PC-3 (cell line): ENCODE measurements at regions of chr10 and their contacts with region 1.

Region 1: GRCh38 chr10:123380497-123381085 is 226.4 kb downstream of the BUB3 start:
- DNase-seq: peak; percentile 69
- ATAC-seq: peak; percentile 39
- H3K4me3 ChIP-seq: 0 out of 2 replicates have a peak overlapping the region, but pooled peaks have one; percentile 14
- H3K27ac ChIP-seq: peak overlapping the region; percentile 65
- H3K4me1 ChIP-seq: peaks cover 39% of the 10 kb centered on the region
- H3K27me3 ChIP-seq: no peaks in the 10 kb centered on the region
- CTCF ChIP-seq: peak; percentile 66

Region 2: DNA sequence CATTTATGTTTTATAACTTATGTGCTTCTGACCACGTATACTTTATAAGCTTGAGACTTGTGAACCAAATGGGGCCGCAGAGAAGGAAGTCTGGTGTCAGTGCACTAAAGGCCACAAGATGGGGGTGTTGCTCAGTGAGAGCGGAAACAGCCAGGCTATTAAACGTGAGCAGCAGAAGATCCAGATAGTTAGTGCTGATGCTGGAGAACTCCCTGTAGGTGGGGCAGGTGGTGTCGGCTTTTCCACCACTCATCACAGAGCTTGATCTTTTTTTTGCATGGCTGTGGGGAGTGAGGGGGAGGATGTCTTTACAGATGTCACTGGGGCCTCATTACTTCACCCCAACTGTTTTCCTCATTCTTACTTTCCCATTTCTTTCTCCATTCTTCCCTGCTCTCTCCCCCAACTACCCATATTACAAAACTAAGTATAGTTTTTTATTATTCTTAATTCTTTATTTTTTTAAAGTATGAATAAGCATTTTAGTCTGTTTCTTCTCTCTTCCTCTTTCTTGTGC is 337.1 kb before region 1 on chr10:
- CTCF ChIA-PET with region 1: interaction called, 3 read pairs
- POLR2A ChIA-PET with region 1: no interaction called
- intact Hi-C with region 1: loop called (anchors 1 kb)
- DNase-seq: peak; percentile 76
- ATAC-seq: peak; percentile 96
- H3K4me3 ChIP-seq: no peak overlapping the region
- H3K27ac ChIP-seq: no peak overlapping the region
- H3K4me1 ChIP-seq: no peaks in the 10 kb centered on the region
- H3K27me3 ChIP-seq: no peaks in the 10 kb centered on the region
- CTCF ChIP-seq: peak; percentile 83

Region 3: DNA sequence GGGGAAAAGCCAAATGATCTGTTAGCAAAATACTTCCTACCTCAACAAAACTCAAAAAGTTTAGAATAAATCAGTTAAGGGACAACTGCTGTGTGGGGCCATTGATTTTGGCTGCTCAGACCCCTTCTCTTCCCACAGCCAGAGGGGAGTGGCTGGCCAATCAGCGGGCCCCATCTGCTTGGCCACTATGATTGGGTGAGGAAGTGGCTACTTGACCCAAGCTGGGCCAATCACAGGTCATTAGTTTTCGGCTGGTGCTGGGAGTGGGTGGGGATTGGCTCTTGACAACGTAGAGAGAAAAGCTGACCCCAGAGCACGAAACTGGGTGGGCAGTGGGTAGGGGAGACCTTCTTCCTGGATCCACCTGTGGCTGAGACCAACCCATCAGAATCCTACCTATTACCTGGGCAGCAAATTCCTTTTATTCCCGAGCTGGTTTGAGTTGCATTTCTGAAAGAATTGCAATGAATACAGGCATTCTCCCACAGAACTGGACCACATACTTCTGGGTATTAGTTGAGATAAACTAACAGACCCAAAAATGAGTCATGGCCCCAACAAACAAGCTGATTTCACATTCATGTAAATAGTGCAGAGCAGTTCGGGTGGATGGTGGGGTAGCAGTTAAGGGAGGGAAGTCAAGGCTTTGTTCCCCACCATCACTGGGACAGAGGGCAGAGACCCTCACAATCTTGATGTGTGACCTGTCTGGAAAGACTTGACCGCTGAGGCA is 280.4 kb before region 1 on chr10:
- CTCF ChIA-PET with region 1: no interaction called
- POLR2A ChIA-PET with region 1: no interaction called
- intact Hi-C with region 1: no loop called
- DNase-seq: peak; percentile 54
- ATAC-seq: peak; percentile 20; the same call in 1 of the 2 replicates
- H3K4me3 ChIP-seq: no peak overlapping the region
- H3K27ac ChIP-seq: no peak overlapping the region
- H3K4me1 ChIP-seq: peaks cover 11% of the 10 kb centered on the region
- H3K27me3 ChIP-seq: no peaks in the 10 kb centered on the region; the same call in 1 of the 2 replicates
- CTCF ChIP-seq: no peak

Region 4: GRCh38 chr10:123144697-123145541 is 235.7 kb before region 1 on chr10:
- CTCF ChIA-PET with region 1: interaction called, 5 read pairs
- POLR2A ChIA-PET with region 1: no interaction called
- intact Hi-C with region 1: loop called (anchors 1 kb)
- DNase-seq: peak; percentile 53
- ATAC-seq: peak; percentile 82
- H3K4me3 ChIP-seq: peak overlapping the region; percentile 52
- H3K27ac ChIP-seq: no peak overlapping the region
- H3K4me1 ChIP-seq: 0 out of 2 replicates have a peak, but pooled peaks cover 6% of the 10 kb centered on the region
- H3K27me3 ChIP-seq: peaks cover 24% of the 10 kb centered on the region
- CTCF ChIP-seq: peak; percentile 39; the same call in 1 of the 2 replicates

Region 5: DNA sequence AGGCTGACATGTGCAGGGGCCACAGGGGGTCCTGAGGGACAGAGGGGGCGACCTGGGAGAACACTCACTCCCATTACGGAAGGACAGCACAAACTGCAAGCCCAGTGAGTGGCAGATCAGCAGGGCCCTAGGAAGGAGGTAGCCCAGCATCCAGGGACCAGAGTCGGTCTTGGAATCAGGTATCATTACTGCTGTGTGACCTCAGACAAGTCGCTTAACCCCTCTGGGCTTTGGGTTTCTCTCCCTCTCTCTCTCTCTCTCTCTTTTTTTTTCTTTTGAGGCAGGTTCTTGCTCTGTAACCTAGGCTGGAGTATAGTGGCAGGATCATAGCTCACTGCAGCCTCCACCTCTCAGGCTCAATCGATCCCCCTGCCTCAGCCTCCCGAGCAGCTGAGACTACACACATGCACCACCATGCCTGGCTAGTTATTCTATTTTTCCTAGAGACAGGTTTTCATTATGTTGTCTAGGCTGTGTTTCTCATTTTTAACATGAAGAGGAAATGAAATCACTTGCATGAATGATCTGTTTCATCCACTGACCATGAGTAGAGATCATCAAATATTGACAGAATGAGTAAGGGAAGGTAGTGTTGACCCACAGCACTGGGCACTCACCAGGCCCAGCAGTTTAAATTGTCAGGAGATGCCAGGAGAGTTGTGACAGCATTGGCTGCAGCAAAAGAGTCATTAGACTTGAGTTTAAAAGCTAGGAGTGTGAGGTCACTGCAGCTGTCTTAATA is 177.0 kb before region 1 on chr10:
- CTCF ChIA-PET with region 1: no interaction called
- POLR2A ChIA-PET with region 1: no interaction called
- intact Hi-C with region 1: loop called (anchors 5 kb)
- DNase-seq: peak; percentile 90
- ATAC-seq: peak; percentile 97
- H3K4me3 ChIP-seq: no peak overlapping the region
- H3K27ac ChIP-seq: peak overlapping the region; percentile 97
- H3K4me1 ChIP-seq: peaks cover 34% of the 10 kb centered on the region
- H3K27me3 ChIP-seq: no peaks in the 10 kb centered on the region
- CTCF ChIP-seq: no peak

Region 6: DNA sequence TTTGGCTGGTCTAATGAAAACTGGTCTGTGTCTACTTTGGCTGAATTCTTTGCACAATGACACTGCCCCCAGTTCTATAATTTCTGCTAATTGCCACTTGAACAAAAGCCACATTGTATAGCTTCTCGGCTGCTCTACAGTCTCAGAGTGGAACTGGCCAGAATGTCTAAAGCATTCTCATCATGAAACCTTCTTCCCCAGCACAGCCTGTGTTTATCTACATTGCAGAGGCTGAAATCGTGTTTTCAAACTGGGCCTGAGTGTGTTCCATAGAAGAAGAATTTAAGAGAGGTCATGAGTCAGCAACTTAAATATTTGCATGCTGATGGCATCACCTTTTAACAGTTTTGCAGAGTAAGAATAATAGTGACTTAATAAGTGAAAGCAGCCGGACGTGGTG is 49.2 kb before region 1 on chr10:
- CTCF ChIA-PET with region 1: no interaction called
- POLR2A ChIA-PET with region 1: no interaction called
- intact Hi-C with region 1: loop called (anchors 1 kb)
- DNase-seq: peak; percentile 69
- ATAC-seq: peak; percentile 93
- H3K4me3 ChIP-seq: no peak overlapping the region
- H3K27ac ChIP-seq: peak overlapping the region; percentile 21; the same call in 1 of the 2 replicates
- H3K4me1 ChIP-seq: peaks cover 6% of the 10 kb centered on the region
- H3K27me3 ChIP-seq: no peaks in the 10 kb centered on the region
- CTCF ChIP-seq: no peak